Activated T-helper 1 cell treated with anti-CD3 and anti-CD28 coated beads, Interleukin-12 subunit alpha, Interleukin-12 subunit beta, Interleukin-2, Interleukin-4 antibody, amounts not matched to agents 30 ng/mL and 10 ng/mL and 1 ng/mL, durations not matched to agents 14 hours and 24 hours and 36 hours (primary cell): ENCODE measurements at regions of chr3 and their contacts with region 1.

Region 1: GRCh38 chr3:50611464-50612233 is at the start of gene CISH:
- DNase-seq: peak; percentile 98
- H3K4me3 Mint-ChIP-seq: peak within 1 kb of the TSS; percentile 99
- H3K27ac Mint-ChIP-seq: peak within 1 kb of the TSS; percentile 98
- H3K4me1 Mint-ChIP-seq: peaks cover 55% of the 10 kb centered on the region
- H3K27me3 Mint-ChIP-seq: no peaks in the 10 kb centered on the region
- total RNA-seq, gene CISH: 334 and 341 TPM in 2 replicates

Region 2: DNA sequence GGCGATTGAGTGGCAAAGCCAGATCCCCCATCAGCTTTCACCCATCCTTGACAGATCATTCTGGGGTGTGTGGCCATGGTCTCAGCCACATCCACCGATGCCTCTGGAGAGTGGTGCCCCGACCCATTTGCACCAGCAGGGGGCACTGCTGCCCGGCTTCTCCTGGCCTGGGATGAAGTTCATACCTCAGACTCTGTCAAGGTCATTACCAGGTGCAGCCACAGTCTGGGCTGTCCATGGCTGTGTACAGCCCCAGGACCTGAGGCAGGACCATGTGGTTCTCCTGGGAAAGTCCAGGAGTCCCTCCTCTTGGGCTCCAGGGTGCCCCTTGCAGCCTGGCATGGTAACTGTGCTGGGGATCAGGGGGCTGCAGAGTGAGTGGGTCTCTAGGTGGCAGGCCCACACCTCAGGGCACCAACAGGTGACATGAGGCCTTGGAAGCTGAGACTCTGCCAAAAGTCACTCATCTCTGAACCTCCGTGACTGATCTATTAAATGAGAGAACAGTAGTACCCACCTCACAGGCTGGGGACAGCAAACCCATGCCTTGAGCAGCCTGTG is 175.5 kb before region 1 on chr3:
- intact Hi-C with region 1: loop called (anchors 1 kb)
- DNase-seq: peak; percentile 67
- H3K4me3 Mint-ChIP-seq: no peak overlapping the region
- H3K27ac Mint-ChIP-seq: no peak overlapping the region
- H3K4me1 Mint-ChIP-seq: peaks cover 5% of the 10 kb centered on the region
- H3K27me3 Mint-ChIP-seq: peaks cover 2% of the 10 kb centered on the region

Region 3: GRCh38 chr3:50587806-50588758 is 23.6 kb before region 1 on chr3:
- intact Hi-C with region 1: loop called (anchors 1 kb)
- DNase-seq: peak; percentile 67
- H3K4me3 Mint-ChIP-seq: peak overlapping the region; percentile 58
- H3K27ac Mint-ChIP-seq: peak overlapping the region; percentile 88
- H3K4me1 Mint-ChIP-seq: peaks cover 87% of the 10 kb centered on the region
- H3K27me3 Mint-ChIP-seq: no peaks in the 10 kb centered on the region

Region 4: DNA sequence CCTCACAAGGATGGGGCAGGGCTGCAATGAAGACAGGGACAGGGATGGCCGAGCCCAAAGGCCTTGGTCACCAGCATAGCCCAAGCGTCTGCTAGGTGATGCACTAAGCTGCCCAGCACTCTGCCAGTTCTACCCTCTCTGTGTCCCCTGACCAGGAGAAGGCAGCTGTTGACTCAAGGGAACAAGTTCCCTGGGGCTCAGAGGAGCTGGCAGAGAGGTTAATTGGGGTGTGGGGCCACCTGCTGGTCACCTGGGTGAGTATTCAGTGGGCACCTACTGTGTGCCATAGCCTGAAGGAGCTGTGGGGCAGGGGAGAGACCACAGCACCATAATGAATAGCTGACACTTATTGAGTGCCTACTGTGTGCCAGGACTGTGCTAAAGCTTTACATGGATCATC is 41.1 kb after region 1 on chr3:
- intact Hi-C with region 1: loop called (anchors 1 kb)
- DNase-seq: no peak
- H3K4me3 Mint-ChIP-seq: no peak overlapping the region
- H3K27ac Mint-ChIP-seq: peak overlapping the region; percentile 75
- H3K4me1 Mint-ChIP-seq: peaks cover 23% of the 10 kb centered on the region
- H3K27me3 Mint-ChIP-seq: no peaks in the 10 kb centered on the region

Region 5: DNA sequence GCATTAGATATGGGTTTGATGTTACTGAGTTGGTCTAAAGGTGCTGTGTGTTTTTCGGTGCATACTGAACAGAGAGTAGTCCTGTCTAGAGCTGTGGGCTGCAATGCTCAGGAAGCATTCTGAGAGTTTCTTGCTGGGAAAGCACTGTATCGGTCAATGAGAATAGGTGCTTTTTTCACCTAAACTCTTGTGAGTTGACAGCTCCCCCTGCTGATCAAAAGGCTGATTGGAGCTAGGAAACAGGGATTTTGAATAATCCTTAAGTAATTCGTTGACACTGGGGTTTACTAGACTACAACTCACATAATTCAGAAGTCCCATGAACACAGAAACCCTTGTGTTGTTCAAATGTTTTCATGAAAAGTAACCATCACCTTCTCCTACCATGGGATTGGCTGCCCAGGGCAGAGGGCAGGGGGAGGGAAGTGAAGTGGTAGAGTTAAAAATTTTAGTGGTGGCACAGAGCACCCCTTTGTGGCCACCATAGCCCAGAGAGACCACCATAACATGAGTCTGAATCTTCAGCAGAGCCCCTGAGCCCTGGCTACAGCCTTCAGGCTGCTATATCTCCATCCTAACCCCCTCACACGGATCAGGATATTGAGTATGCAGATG is 760.4 kb after region 1 on chr3:
- intact Hi-C with region 1: loop called (anchors 1 kb)
- DNase-seq: no peak
- H3K4me3 Mint-ChIP-seq: no peak overlapping the region
- H3K27ac Mint-ChIP-seq: no peak overlapping the region
- H3K4me1 Mint-ChIP-seq: no peaks in the 10 kb centered on the region
- H3K27me3 Mint-ChIP-seq: peaks cover 6% of the 10 kb centered on the region

Region 6: DNA sequence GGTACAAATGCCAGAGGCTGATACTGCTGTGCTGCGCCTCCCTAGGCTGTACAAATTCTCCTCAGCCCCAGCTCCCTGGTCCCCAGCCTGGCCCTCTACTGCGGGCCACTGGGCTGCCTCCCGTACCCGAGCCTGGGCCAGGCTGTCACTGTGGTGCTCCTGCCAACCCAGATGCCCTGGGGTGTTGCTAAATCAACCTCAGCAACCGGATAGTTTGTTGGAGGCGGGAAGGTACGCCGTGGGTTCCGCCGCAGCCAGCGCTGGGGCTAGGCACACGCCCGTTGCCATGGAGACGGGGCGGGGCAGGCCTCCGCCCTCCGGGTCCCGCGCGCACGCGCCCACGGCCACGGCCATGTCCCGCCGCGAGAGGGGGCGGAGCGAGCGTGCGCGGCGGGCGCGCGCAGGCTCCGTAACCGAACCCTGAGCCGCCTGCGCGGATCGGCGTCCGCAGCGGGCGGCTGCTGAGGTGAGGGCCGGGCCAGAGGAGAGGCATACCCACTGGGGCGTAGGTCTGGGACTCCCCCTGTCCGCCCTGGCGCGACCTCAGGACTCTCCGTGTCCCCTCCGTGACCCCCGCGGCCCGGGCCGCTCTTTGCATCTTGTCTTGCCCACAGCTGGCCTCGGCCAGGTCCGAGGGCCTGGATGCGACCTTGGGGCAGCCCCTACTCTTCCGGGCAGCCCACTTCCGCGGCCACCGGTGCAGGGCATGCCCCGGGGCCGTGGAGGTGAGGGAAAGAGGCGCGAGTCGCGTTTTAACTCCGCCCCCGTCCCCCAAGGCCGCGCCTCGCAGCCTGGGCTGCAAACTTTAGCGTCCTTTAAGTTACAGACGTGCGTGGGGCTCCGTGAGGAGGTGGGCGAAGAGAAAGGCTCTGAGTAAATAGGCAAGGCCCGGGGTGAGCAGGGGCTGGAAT is 1059.4 kb after region 1 on chr3 and contains the start of gene TEX264:
- intact Hi-C with region 1: loop called (anchors 2 kb)
- DNase-seq: peak; percentile 95
- H3K4me3 Mint-ChIP-seq: peak within 1 kb of the TSS; percentile 86
- H3K27ac Mint-ChIP-seq: peak within 1 kb of the TSS; percentile 87
- H3K4me1 Mint-ChIP-seq: peaks cover 65% of the 10 kb centered on the region
- H3K27me3 Mint-ChIP-seq: no peaks in the 10 kb centered on the region
- total RNA-seq, gene TEX264: 50.3 and 52.0 TPM in 2 replicates